BJ (cell line): ENCODE measurements at regions of chr7 and their contacts with region 1.

Region 1: DNA sequence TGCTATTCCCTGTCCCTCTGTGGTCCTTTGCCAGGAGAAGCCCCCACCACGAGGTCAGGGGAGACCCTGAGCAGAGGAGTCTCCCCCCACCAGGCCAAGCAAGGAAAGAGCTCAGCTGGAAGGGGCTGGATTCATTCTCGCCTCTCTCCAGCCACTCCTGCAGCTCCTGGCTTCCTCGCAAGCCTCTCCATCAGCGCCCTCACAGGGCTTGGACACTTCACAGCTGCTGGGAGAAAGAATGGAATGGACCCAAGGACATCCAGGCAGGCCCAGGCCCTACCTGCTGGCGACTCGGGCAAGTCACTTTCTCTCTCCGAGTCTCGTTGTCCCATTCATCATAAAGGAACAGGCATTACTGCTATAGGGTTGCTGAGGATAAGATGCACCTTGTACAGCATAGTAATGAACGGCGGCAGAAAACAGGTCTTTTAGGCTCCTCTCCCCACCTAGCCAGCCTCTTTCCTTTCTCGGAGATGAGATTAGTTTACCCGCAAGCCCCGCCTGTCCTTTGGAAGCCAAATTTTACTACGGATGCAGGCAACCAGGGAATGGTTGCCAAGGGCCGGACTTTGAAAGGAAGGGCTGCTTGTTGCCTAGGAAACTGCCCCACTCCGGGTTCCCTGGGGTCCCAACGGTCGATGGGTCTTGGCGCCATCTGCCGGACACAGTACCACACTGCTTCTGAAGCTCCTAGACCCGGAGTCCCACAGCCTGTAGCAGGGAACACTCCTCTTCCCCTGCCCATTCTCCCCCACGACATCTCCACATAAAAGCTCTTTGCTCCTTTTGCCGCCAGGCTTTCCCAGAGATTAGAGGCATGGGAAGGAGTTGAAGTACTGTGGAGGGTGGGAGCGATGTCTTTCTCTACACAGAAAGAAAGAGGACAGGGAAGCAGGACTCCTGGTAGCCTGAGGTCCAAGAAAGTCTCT is 22.3 kb downstream of the IMPDH1 start:
- DNase-seq: no peak
- H3K4me3 ChIP-seq: no peak overlapping the region
- H3K27me3 ChIP-seq: peaks cover 9% of the 10 kb centered on the region
- CTCF ChIP-seq: peak; percentile 87

Region 2: DNA sequence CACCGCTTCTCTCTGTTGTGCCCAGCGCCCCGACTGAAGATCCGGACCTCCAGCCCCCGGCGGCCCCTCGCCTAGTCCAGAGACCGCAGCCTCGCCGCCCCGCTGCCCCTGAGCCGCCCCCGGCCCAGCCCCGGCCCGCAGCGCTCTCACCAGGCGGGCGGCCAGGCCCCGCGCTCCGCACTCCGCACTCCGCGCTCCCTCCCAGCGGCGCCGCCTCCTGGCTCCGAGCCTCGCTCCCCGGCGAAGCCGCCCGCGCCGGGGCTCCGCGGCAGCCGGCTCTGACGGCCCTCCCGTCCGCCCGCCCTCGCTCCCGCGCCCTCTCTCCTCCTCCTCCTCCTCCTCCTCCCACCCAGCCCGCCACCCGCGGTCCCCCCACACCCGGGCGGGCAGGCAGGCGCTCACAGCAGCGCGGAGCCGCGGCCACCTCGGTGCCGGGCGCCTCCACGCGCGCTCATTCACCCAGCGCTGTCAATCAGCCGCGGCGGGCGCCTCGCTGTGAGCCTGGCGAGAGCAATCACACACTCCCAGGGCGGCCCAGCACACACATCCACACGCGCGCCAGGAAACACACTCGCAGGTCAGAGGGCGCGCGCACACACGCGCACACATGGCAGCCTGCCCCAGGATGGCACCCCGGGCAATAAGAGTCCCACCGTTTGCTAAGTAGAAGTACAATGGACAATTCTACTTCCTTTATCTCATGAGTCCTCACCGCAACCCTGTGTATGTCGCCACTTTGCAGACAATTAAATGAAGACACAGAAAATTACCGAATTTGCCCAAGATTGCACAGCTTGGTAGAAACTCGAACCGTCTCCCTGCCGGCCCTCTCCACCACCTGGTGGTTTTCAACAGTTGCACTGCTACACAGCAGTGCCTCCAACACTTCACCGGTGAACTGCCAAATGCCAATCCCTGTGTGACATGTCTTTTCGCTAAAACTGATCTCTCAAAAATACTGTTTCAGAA is 25.8 kb before region 1 on chr7 and contains the start of gene PRRT4:
- CTCF ChIA-PET with region 1: interaction called, 17 read pairs
- POLR2A ChIA-PET with region 1: no interaction called
- DNase-seq: no peak
- H3K4me3 ChIP-seq: peak within 1 kb of the TSS; percentile 32
- H3K27me3 ChIP-seq: peaks cover 51% of the 10 kb centered on the region
- CTCF ChIP-seq: no peak
- polyA plus RNA-seq, gene PRRT4: 0.07 TPM in 1 of 2 replicates, not detected in the other

Region 3: GRCh38 chr7:128373606-128374005 is 13.9 kb before region 1 on chr7:
- CTCF ChIA-PET with region 1: interaction called, 45 read pairs
- POLR2A ChIA-PET with region 1: no interaction called
- DNase-seq: no peak
- H3K4me3 ChIP-seq: no peak overlapping the region
- H3K27me3 ChIP-seq: peaks cover 3% of the 10 kb centered on the region
- CTCF ChIP-seq: no peak

Region 4: GRCh38 chr7:128398016-128398840 is 10.7 kb after region 1 on chr7:
- CTCF ChIA-PET with region 1: interaction called, 43 read pairs
- POLR2A ChIA-PET with region 1: no interaction called
- DNase-seq: no peak
- H3K4me3 ChIP-seq: no peak overlapping the region
- H3K27me3 ChIP-seq: no peaks in the 10 kb centered on the region
- CTCF ChIP-seq: peak; percentile 94

Region 5: DNA sequence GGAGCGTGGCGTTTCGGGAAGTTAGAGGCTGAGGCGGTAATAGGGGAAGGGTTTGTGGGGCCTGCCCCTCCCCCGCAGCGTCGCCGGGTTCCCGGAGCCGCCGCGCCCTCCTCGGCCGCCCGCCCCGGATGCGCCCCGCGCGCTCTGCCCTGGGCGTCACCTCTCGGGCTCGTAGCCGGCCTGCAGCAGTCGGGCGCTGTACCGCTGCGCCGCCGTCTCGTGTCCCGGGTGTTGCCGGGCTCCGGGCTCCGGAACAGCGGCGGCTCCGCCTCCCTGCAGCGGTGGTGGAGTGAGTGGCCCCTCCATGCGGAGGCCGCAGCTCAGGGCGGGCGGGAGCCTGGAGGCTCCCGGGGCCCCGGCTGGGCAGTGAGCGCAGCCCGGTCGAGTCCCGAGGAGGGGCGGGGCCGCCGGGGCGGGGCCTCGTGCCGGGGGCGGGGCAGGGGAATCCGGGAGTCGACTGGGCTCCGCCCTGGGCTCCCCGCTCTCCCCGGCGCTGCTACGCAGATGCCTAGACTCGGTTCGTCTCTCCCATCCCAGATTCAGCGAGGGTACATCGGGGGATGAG is 22.2 kb after region 1 on chr7 and contains the start of gene IMPDH1:
- CTCF ChIA-PET with region 1: interaction called, 18 read pairs
- POLR2A ChIA-PET with region 1: no interaction called
- DNase-seq: peak; percentile 34
- H3K4me3 ChIP-seq: peak within 1 kb of the TSS; percentile 60
- H3K27me3 ChIP-seq: peaks cover 2% of the 10 kb centered on the region
- CTCF ChIP-seq: no peak
- polyA plus RNA-seq, gene IMPDH1: 65.7 and 84.5 TPM in 2 replicates

Region 6: DNA sequence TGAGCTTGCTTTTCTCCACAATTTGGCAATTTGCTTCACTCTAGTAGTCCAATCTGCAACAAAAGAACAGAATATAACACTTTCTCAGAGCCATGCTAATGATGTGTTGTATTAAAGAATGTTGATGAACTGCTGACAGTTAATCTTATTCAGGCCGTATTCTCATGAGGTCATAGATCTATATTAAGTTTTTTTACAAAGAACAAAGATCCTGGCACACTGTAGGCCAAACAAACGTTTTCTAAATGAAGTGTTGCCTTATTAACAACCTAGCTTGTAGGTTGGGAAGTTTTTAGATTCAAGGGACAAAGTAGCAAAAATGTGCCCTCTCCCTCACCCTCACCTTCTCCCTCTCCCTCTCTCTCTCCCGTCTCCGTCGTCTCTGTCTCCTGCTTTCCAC is 75.0 kb after region 1 on chr7:
- CTCF ChIA-PET with region 1: interaction called, 12 read pairs
- POLR2A ChIA-PET with region 1: no interaction called
- DNase-seq: no peak
- H3K4me3 ChIP-seq: no peak overlapping the region
- H3K27me3 ChIP-seq: no peaks in the 10 kb centered on the region
- CTCF ChIP-seq: no peak